H1 (cell line): ENCODE measurements at regions of chr13 and their contacts with region 1.

Region 1: GRCh38 chr13:24220086-24220703 is 59.7 kb downstream of the SPATA13 start:
- DNase-seq: no peak
- H3K4me3 ChIP-seq: no peak overlapping the region
- H3K27ac ChIP-seq: no peak overlapping the region
- H3K4me1 ChIP-seq: peaks cover 8 to 20% (median 17%) of the 10 kb centered on the region in 4 experiments
- H3K27me3 ChIP-seq: no peaks in the 10 kb centered on the region
- CTCF ChIP-seq: peak in 2 of 3 experiments; percentile 76 to 87; a peak in 3 of 4 replicates
- EP300 ChIP-seq: no peak
- POLR2A ChIP-seq: no peak
- RAD21 ChIP-seq: peak; percentile 95 to 98

Region 2: DNA sequence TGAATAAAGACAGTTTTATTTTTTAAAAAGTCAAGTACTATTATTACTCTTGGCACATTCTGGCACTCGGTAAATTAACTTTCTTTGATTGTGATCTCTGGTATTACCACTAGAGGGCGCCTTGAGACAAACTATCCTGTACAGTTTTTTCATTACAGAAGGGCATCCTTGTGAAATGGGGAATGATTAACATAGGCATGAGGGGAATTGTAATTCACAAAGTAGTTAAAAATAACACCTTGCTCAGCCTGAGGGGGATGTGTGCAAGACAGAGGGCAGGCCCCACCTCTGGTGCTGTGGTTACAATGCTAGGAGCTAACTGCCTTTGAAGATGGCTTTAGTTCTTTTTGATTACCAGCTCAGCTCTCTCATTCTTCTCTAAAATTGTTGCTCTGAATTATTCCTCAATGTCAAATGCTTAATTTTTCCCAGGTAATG is 298.7 kb before region 1 on chr13:
- CTCF ChIA-PET with region 1: interaction called, 11 read pairs
- POLR2A ChIA-PET with region 1: no interaction called
- DNase-seq: peak in 1 of 2 experiments; percentile 54
- H3K4me3 ChIP-seq: peak overlapping the region in 1 of 4 experiments; percentile 38; a peak in 1 of 8 replicates
- H3K27ac ChIP-seq: no peak overlapping the region
- H3K4me1 ChIP-seq: peaks cover 0 to 6% (median 4%) of the 10 kb centered on the region in 4 experiments; a peak in 3 of 7 replicates
- H3K27me3 ChIP-seq: no peaks in the 10 kb centered on the region
- CTCF ChIP-seq: peak in 2 of 3 experiments; percentile 50 to 63; a peak in 2 of 4 replicates
- EP300 ChIP-seq: no peak; a peak in 1 of 3 replicates
- POLR2A ChIP-seq: no peak
- RAD21 ChIP-seq: peak; percentile 85 to 88

Region 3: GRCh38 chr13:24033527-24034302 is 186.5 kb before region 1 on chr13:
- CTCF ChIA-PET with region 1: interaction called, 12 read pairs
- POLR2A ChIA-PET with region 1: no interaction called
- DNase-seq: no peak
- H3K4me3 ChIP-seq: no peak overlapping the region
- H3K27ac ChIP-seq: no peak overlapping the region
- H3K4me1 ChIP-seq: peaks cover 0 to 2% (median 0%) of the 10 kb centered on the region in 4 experiments; a peak in 2 of 7 replicates
- H3K27me3 ChIP-seq: peaks cover 0 to 6% (median 5%) of the 10 kb centered on the region in 4 experiments; a peak in 4 of 7 replicates
- CTCF ChIP-seq: no peak
- EP300 ChIP-seq: no peak
- POLR2A ChIP-seq: no peak
- RAD21 ChIP-seq: no peak

Region 4: DNA sequence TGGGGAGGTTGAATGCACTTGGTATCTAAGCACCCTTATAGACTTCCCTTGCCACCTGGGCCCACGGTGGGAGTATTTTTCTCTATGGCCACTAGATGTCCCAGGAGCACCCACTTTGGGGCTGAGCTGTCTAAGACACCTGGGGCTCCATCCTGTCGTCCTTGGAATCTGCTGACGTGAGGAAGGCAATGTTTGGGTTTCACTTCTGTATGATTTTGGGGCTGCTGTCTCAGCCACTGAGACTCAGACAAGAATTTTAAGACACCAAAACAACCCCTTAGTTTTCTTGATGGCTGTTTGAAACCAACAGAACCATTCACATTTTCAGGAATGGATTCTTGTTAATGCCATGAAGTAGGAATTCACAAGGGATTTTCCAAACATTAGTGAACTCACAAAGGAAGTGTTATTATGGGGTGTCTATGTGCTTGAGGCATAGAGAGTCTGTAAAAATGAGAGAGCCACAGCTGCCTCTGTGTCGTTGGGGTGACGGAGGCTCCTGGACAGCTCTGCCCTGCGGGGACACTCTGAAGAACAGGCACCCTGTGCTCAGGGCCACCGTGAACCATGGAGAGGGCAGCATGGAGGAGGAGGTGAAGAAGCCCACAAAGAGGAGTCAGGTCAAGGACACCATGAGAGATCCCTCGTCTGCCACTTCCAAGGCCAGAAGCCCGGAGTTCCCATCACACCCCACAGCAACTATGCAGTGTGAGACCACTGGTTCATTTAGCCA is 166.5 kb before region 1 on chr13:
- CTCF ChIA-PET with region 1: interaction called, 42 read pairs
- POLR2A ChIA-PET with region 1: interaction called, 4 read pairs
- DNase-seq: peak; percentile 49 to 76
- H3K4me3 ChIP-seq: no peak overlapping the region
- H3K27ac ChIP-seq: no peak overlapping the region
- H3K4me1 ChIP-seq: peaks cover 0 to 13% (median 6%) of the 10 kb centered on the region in 4 experiments; a peak in 5 of 7 replicates
- H3K27me3 ChIP-seq: no peaks in the 10 kb centered on the region
- CTCF ChIP-seq: peak; percentile 59 to 80 (median 77)
- EP300 ChIP-seq: no peak
- POLR2A ChIP-seq: no peak
- RAD21 ChIP-seq: peak; percentile 91 to 93

Region 5: DNA sequence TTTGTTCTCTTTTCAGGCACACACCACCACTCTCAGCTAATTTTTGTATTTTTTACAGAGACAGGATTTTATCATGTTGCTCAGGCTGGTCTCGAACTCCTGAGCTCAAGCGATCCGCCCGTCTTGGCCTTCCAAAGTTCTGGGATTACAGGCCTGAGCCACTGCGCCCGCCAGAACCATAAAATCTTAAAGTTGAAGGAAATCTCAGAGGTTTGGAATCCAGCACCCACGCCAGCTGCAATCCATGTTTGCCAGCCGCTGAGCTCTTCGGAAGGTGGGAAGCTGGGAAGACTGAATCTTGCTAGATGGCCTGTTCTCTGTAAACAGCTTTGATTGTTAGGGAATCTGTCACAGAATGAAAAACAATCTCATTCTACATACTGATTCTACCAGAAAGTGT is 21.2 kb before region 1 on chr13:
- CTCF ChIA-PET with region 1: interaction called, 13 read pairs
- POLR2A ChIA-PET with region 1: interaction called, 3 read pairs
- DNase-seq: no peak
- H3K4me3 ChIP-seq: no peak overlapping the region
- H3K27ac ChIP-seq: no peak overlapping the region
- H3K4me1 ChIP-seq: peaks cover 0 to 7% (median 3%) of the 10 kb centered on the region in 4 experiments; a peak in 4 of 7 replicates
- H3K27me3 ChIP-seq: no peaks in the 10 kb centered on the region
- CTCF ChIP-seq: no peak
- EP300 ChIP-seq: no peak
- POLR2A ChIP-seq: no peak
- RAD21 ChIP-seq: no peak